Activated T-helper 2 cell treated with anti-CD3 and anti-CD28 coated beads, Interferon-gamma antibody, Interleukin-2, Interleukin-4, amounts not matched to agents 10 μg/mL and 5 μg/mL and 100 μg/mL, durations not matched to agents 14 hours and 24 hours and 36 hours (primary cell): ENCODE measurements at regions of chr1 and their contacts with region 1.

Region 1: GRCh38 chr1:9689011-9689706 is 37.6 kb downstream of the PIK3CD start:
- DNase-seq: peak; percentile 74
- H3K4me3 Mint-ChIP-seq: peak overlapping the region; percentile 65
- H3K27ac Mint-ChIP-seq: no peak overlapping the region
- H3K4me1 Mint-ChIP-seq: peaks cover 57% of the 10 kb centered on the region
- H3K27me3 Mint-ChIP-seq: no peaks in the 10 kb centered on the region

Region 2: DNA sequence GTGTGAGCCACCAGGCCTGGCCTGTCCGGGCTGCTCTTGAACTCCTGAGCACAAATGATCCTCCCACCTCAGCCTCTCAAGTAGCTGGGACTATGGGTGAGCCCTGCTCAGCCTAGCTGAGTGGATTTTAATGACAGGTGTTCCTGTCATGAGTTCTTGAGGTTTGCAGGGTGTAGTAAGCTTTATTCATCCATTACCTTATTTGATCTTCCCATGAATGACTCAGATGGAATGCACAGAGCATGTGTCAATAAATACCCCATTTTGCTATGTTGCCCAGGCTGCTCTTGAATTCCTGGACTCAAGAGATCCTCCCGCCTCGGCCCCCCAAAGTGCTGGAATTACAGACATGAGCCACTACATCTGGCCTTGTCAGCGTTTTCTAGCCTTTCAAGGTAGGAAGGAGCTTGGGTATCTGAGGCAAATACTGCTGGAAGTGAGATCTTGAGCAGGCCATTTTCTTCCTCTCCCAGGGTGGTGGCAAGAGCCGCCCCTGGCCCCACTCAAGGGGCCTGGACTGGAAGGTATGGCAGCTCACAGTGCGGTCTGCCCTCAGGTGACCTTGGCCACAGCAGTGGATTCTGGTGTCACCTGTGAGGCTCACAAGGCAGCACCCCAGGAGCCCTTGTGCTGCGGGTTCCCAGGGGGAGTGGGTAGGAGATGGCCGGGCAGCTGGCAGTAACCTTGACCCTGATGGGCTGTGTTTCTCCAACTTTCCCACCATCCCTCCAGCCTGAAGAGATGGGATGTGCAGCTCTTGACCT is 17.6 kb before region 1 on chr1:
- intact Hi-C with region 1: loop called (anchors 2 kb)
- DNase-seq: no peak
- H3K4me3 Mint-ChIP-seq: no peak overlapping the region
- H3K27ac Mint-ChIP-seq: peak overlapping the region; percentile 59
- H3K4me1 Mint-ChIP-seq: peaks cover 34% of the 10 kb centered on the region
- H3K27me3 Mint-ChIP-seq: no peaks in the 10 kb centered on the region

Region 3: GRCh38 chr1:10267319-10267718 is 578.2 kb after region 1 on chr1:
- intact Hi-C with region 1: no loop called
- DNase-seq: no peak
- H3K4me3 Mint-ChIP-seq: no peak overlapping the region
- H3K27ac Mint-ChIP-seq: no peak overlapping the region
- H3K4me1 Mint-ChIP-seq: peaks cover 6% of the 10 kb centered on the region
- H3K27me3 Mint-ChIP-seq: no peaks in the 10 kb centered on the region